Activated CD4-positive, alpha-beta memory T cell treated with anti-CD3 and anti-CD28 coated beads for 36 hours (primary cell): ENCODE measurements at regions of chr10 and their contacts with region 1.

Region 1: GRCh38 chr10:44125879-44126278 is 259.0 kb downstream of the CXCL12 start:
- DNase-seq: no peak
- H3K4me3 Mint-ChIP-seq: no peak overlapping the region
- H3K27ac Mint-ChIP-seq: no peak overlapping the region
- H3K4me1 Mint-ChIP-seq: no peaks in the 10 kb centered on the region
- H3K27me3 Mint-ChIP-seq: peaks cover 12% of the 10 kb centered on the region

Region 2: GRCh38 chr10:44068716-44069482 is 57.0 kb before region 1 on chr10:
- CTCF ChIA-PET with region 1: no interaction called
- POLR2A ChIA-PET with region 1: no interaction called
- intact Hi-C with region 1: loop called (anchors 10 kb)
- DNase-seq: no peak
- H3K4me3 Mint-ChIP-seq: no peak overlapping the region
- H3K27ac Mint-ChIP-seq: no peak overlapping the region
- H3K4me1 Mint-ChIP-seq: no peaks in the 10 kb centered on the region
- H3K27me3 Mint-ChIP-seq: no peaks in the 10 kb centered on the region

Region 3: GRCh38 chr10:44478876-44479705 is 353.2 kb after region 1 on chr10:
- CTCF ChIA-PET with region 1: no interaction called
- POLR2A ChIA-PET with region 1: no interaction called
- intact Hi-C with region 1: no loop called
- DNase-seq: no peak
- H3K4me3 Mint-ChIP-seq: no peak overlapping the region
- H3K27ac Mint-ChIP-seq: no peak overlapping the region
- H3K4me1 Mint-ChIP-seq: no peaks in the 10 kb centered on the region
- H3K27me3 Mint-ChIP-seq: no peaks in the 10 kb centered on the region